ENCODE measurements at regions of chr18 and their contacts with region 1.

Region 1: GRCh38 chr18:31576670-31577069 is 15.0 kb upstream of the TTR start:
- DNase-seq: no peak
- H3K4me3 ChIP-seq: no peak overlapping the region
- H3K27ac ChIP-seq: no peak overlapping the region
- H3K4me1 ChIP-seq: peaks cover 0 to 4% (median 0%) of the 10 kb centered on the region in 4 donors
- H3K27me3 ChIP-seq: no peaks in the 10 kb centered on the region
- CTCF ChIP-seq: no peak
- EP300 ChIP-seq: no peak
- POLR2A ChIP-seq: no peak

Region 2: GRCh38 chr18:31546476-31546875 is 30.2 kb before region 1 on chr18:
- in situ Hi-C with region 1: no loop called
- intact Hi-C with region 1: no loop called
- DNase-seq: no peak
- H3K4me3 ChIP-seq: no peak overlapping the region
- H3K27ac ChIP-seq: no peak overlapping the region
- H3K4me1 ChIP-seq: peaks cover 0 to 19% (median 0%) of the 10 kb centered on the region in 4 donors
- H3K27me3 ChIP-seq: no peaks in the 10 kb centered on the region
- CTCF ChIP-seq: no peak
- EP300 ChIP-seq: no peak
- POLR2A ChIP-seq: no peak

Region 3: GRCh38 chr18:31977270-31977872 is 400.7 kb after region 1 on chr18:
- in situ Hi-C with region 1: loop called in 1 of 4 experiments (anchors 25 kb)
- intact Hi-C with region 1: loop called (anchors 10 kb)
- DNase-seq: peak; percentile 18
- H3K4me3 ChIP-seq: no peak overlapping the region
- H3K27ac ChIP-seq: no peak overlapping the region
- H3K4me1 ChIP-seq: no peaks in the 10 kb centered on the region
- H3K27me3 ChIP-seq: no peaks in the 10 kb centered on the region
- CTCF ChIP-seq: peak; percentile 45 to 64 (median 48)
- EP300 ChIP-seq: no peak
- POLR2A ChIP-seq: no peak

Measured in transverse colon (tissue), 4 donors.